MCF 10A (cell line): ENCODE measurements at regions of chr17 and their contacts with region 1.

Region 1: DNA sequence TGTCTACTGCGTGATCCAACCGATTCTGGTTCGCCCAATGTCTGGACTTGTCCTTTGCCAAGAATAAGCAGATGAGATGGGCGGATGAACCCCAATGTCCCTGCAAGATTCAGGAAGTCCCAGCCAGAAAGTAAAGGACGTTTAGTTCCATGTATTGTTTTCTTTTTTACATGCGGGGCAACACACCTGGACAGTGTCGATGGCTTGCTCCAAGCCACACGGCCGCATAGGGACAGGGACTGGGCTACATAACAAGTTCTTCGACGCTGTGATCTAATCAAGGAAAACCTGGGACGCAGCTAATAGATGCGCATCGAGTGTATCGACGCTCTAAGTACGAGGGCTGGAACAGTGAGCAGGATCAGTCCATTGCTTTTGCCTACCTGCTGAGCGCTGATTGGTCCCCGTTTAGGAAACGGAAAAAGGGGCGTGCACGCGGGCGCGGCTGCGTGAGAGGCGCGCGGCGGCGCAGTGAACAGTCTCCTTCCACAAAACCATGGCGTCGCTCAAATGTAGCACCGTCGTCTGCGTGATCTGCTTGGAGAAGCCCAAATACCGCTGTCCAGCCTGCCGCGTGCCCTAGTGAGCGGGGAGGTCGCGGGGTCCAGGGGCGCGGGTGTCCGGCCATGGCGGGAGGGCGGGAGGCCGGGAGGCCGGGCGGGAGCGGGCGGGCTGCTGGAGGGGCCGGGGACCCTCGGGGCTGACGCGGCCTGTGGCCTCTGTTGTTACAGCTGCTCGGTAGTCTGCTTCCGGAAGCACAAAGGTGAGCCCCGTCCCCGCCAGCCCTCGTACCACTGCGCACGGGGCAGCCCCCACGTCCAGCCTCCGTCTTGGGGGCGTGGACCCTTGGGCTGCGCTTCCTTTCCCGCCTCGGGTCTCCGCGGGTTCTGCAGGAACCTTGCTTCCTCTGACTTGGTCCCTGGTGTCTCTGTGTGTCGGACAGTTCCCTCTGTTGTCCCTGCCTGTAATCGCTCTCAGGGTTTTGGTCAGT is at the start of gene ZNHIT3:
- DNase-seq: peak; percentile 94
- H3K4me3 Mint-ChIP-seq: peak within 1 kb of the TSS; percentile 86
- H3K27ac Mint-ChIP-seq: peak within 1 kb of the TSS; percentile 92
- H3K4me1 Mint-ChIP-seq: peaks cover 6% of the 10 kb centered on the region
- H3K27me3 Mint-ChIP-seq: peaks cover 10% of the 10 kb centered on the region
- CTCF ChIP-seq: no peak
- total RNA-seq, gene ZNHIT3: 33.9 and 35.5 TPM in 2 replicates

Region 2: DNA sequence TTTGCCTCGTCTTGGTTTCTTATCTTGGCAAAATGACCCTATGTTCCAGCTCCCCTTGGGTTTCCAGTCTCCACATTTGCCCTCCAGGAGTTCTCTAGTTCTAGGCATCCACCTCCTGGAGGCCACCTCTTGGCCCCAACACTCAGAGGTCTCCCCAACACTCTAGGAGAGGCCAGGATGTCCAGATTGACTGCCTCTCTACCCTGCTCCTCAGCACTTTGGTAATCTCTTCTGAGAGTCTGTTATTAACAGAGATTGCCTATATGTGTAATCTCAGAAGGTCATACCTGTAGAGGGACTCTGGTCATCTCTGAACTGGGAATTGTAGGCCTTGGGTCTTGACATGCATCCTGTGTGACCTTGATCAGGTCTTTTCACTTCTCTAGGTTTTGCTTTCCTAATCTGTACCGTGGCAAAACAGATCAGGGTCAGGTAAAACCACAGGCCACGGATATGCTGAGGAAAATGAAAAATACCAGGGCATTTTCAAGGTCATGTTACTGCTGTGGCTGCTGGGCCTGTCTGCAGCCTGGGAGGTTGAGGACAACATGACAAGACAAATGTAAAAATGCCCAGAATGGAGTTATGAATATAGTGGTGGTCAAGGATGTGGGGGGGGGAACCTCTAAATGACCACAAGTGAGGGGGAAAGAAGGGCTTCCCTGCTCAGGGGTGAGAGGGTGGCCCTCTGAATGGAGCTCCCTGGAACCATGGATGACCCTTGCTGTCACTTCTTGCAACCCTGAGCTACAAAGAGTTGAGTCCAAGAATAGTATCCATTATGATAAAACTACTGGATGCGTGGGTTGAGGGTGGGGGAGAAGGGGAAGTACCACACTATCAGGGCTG is 280.6 kb before region 1 on chr17:
- CTCF ChIA-PET with region 1: no interaction called
- POLR2A ChIA-PET with region 1: no interaction called
- intact Hi-C with region 1: no loop called
- DNase-seq: no peak
- H3K4me3 Mint-ChIP-seq: no peak overlapping the region
- H3K27ac Mint-ChIP-seq: no peak overlapping the region
- H3K4me1 Mint-ChIP-seq: no peaks in the 10 kb centered on the region
- H3K27me3 Mint-ChIP-seq: peaks cover 52% of the 10 kb centered on the region
- CTCF ChIP-seq: no peak

Region 3: GRCh38 chr17:36463916-36464315 is 22.6 kb before region 1 on chr17:
- CTCF ChIA-PET with region 1: interaction called, 8 read pairs
- POLR2A ChIA-PET with region 1: interaction called, 3 read pairs
- intact Hi-C with region 1: loop called (anchors 2 kb)
- DNase-seq: peak; percentile 84
- H3K4me3 Mint-ChIP-seq: no peak overlapping the region
- H3K27ac Mint-ChIP-seq: no peak overlapping the region
- H3K4me1 Mint-ChIP-seq: no peaks in the 10 kb centered on the region
- H3K27me3 Mint-ChIP-seq: peaks cover 77% of the 10 kb centered on the region
- CTCF ChIP-seq: no peak